ENCODE measurements at regions of chr4 and their contacts with region 1.

Region 1: GRCh38 chr4:95637043-95637600 is 88.3 kb upstream of the UNC5C start:
- DNase-seq: no peak
- H3K4me3 ChIP-seq: no peak overlapping the region
- H3K27ac ChIP-seq: no peak overlapping the region
- H3K4me1 ChIP-seq: peaks cover 0 to 9% (median 3%) of the 10 kb centered on the region in 4 experiments; a peak in 4 of 7 replicates
- H3K27me3 ChIP-seq: no peaks in the 10 kb centered on the region
- CTCF ChIP-seq: peak in 2 of 3 experiments; percentile 43 to 61; a peak in 3 of 4 replicates
- EP300 ChIP-seq: no peak
- POLR2A ChIP-seq: no peak
- RAD21 ChIP-seq: peak; percentile 36 to 59; a peak in 3 of 4 replicates

Region 2: GRCh38 chr4:95510145-95510544 is 127.0 kb before region 1 on chr4:
- CTCF ChIA-PET with region 1: interaction called, 11 read pairs
- POLR2A ChIA-PET with region 1: no interaction called
- DNase-seq: no peak
- H3K4me3 ChIP-seq: no peak overlapping the region
- H3K27ac ChIP-seq: no peak overlapping the region
- H3K4me1 ChIP-seq: no peaks in the 10 kb centered on the region
- H3K27me3 ChIP-seq: no peaks in the 10 kb centered on the region
- CTCF ChIP-seq: peak in 2 of 3 experiments; percentile 29 to 43; a peak in 2 of 4 replicates
- EP300 ChIP-seq: no peak
- POLR2A ChIP-seq: no peak
- RAD21 ChIP-seq: peak; percentile 58 to 64

Region 3: DNA sequence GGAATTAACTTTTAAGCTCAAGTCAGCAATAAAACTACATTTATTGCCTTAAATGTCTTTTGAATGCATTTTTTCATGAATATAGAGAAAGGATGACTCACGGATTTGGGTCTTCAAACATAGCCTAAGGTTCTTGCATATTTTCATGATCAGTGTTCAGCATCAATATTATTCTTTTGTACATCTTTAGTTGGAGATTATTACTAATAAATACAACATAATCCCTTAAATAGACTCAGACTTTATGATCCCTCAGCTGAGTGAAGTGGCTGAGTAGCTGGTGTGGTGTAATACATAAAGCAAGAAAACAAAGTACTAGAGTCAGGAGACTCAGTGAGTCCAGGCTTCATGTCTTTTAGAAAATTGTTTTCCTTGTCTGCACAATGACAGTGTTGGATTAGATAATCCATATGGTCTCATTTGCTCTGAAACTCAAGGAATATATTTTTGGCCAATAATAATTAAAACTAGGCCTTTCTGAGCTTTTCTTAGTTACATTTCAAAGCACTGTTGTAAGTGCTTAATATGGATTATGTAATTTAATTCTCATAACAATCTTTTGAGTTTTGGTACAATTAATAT is 10.0 kb before region 1 on chr4:
- CTCF ChIA-PET with region 1: interaction called, 13 read pairs
- POLR2A ChIA-PET with region 1: no interaction called
- DNase-seq: no peak
- H3K4me3 ChIP-seq: no peak overlapping the region
- H3K27ac ChIP-seq: no peak overlapping the region
- H3K4me1 ChIP-seq: 0 out of 7 replicates have a peak, but pooled peaks cover 0 to 3% (median 0%) of the 10 kb centered on the region in 4 experiments
- H3K27me3 ChIP-seq: no peaks in the 10 kb centered on the region; a peak in 1 of 7 replicates
- CTCF ChIP-seq: no peak
- EP300 ChIP-seq: no peak
- POLR2A ChIP-seq: no peak
- RAD21 ChIP-seq: no peak

Region 4: DNA sequence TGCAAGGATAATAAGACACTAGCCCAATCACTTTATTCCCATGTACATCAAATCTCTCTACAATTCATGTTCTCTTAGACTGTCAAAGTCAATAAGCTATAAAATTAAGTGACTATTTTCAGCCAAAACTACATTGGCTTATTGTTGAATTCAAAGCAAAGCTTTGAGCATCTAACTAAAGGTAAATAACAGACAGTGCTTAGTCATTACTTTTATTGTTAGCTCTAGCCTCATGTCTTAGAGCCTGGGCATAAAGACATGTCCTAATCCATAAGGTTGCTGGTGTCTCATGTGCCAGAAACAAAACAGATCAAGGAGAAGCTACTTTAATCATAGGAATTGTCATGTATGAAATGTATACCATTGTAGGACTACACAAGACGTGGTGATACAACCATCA is 14.8 kb after region 1 on chr4:
- CTCF ChIA-PET with region 1: interaction called, 27 read pairs
- POLR2A ChIA-PET with region 1: no interaction called
- DNase-seq: no peak
- H3K4me3 ChIP-seq: no peak overlapping the region
- H3K27ac ChIP-seq: no peak overlapping the region
- H3K4me1 ChIP-seq: no peaks in the 10 kb centered on the region
- H3K27me3 ChIP-seq: no peaks in the 10 kb centered on the region
- CTCF ChIP-seq: no peak
- EP300 ChIP-seq: no peak
- POLR2A ChIP-seq: no peak
- RAD21 ChIP-seq: no peak

Measured in H1 (cell line).